Dorsolateral prefrontal cortex (tissue), 120 donors: ENCODE measurements at regions of chr2 and their contacts with region 1.

Region 1: DNA sequence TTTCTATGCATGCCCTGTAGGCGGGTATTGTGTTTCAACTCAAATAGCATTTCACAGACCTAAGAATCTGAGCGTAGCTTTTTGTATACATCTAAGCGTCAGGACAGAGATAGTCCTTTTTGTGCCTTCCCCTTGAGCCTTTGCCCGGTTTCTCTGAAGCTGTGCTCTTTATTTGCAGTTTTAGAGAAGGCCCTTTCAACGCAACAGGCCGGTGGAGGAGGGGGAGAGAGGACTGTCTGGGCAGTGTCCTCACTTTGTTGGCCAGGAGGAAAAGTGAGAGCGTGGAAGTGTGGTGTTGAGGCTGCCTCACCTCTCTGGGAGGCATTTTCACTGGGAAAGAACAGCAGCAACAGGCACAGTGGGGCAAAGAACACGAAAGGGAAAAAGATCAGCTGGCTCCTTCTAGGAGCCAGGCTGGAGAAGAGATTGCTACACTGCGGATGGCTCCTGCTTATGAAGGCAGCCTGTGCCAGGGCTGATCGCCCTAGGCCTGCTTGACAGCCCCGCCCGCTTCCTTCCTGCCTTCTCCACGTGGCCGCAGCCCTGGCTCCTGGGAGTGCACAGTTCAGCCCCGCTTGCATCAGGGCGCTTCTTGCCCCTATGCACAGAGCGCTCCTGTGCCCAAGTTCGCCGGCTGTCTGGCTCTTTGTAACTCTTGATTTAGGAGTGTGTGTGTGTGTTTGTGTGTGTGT is 195.6 kb upstream of the POU3F3 start:
- DNase-seq: peak in 8 of 10 donors; percentile 23 to 56 (median 50)
- H3K4me3 ChIP-seq: peak overlapping the region in 34 of 59 donors; percentile 13 to 73 (median 61)
- H3K27ac ChIP-seq: peak overlapping the region in 35 of 59 donors; percentile 0 to 80 (median 53)
- H3K27me3 ChIP-seq: peaks cover 0 to 11% (median 0%) of the 10 kb centered on the region in 45 donors
- CTCF ChIP-seq: no peak

Region 2: DNA sequence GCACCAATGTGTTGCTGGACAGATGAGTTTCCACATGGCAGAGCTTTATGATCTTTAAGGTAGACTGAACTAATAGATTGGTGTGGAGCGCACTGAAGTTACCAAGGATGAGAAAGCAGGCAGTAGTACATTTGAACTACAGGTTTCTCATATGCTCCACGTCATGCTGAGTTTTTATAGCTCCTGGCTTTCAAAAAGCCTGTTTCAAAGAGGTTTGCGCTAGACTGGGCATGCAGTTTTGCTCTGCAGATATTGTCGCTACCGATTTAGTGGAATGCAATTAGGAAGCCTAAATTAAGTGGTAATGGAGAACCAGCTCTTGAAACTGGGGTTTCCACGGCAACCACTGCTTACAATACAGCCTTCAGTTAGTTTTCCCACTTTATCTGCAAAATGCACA is 44.2 kb after region 1 on chr2:
- intact Hi-C with region 1: loop called in 1 of 2 experiments (anchors 5 kb)
- DNase-seq: peak in 1 of 10 donors; percentile 12
- H3K4me3 ChIP-seq: peak overlapping the region in 54 of 59 donors; percentile 10 to 67 (median 46)
- H3K27ac ChIP-seq: peak overlapping the region in 44 of 59 donors; percentile 7 to 76 (median 60)
- H3K27me3 ChIP-seq: peaks cover 0 to 8% (median 0%) of the 10 kb centered on the region in 45 donors
- CTCF ChIP-seq: no peak

Region 3: GRCh38 chr2:104938231-104938941 is 280.1 kb after region 1 on chr2:
- intact Hi-C with region 1: loop called in 1 of 2 experiments (anchors 10 kb)
- DNase-seq: peak in 7 of 10 donors; percentile 40 to 84 (median 69)
- H3K4me3 ChIP-seq: no peak overlapping the region
- H3K27ac ChIP-seq: no peak overlapping the region
- H3K27me3 ChIP-seq: no peaks in the 10 kb centered on the region
- CTCF ChIP-seq: no peak

Region 4: DNA sequence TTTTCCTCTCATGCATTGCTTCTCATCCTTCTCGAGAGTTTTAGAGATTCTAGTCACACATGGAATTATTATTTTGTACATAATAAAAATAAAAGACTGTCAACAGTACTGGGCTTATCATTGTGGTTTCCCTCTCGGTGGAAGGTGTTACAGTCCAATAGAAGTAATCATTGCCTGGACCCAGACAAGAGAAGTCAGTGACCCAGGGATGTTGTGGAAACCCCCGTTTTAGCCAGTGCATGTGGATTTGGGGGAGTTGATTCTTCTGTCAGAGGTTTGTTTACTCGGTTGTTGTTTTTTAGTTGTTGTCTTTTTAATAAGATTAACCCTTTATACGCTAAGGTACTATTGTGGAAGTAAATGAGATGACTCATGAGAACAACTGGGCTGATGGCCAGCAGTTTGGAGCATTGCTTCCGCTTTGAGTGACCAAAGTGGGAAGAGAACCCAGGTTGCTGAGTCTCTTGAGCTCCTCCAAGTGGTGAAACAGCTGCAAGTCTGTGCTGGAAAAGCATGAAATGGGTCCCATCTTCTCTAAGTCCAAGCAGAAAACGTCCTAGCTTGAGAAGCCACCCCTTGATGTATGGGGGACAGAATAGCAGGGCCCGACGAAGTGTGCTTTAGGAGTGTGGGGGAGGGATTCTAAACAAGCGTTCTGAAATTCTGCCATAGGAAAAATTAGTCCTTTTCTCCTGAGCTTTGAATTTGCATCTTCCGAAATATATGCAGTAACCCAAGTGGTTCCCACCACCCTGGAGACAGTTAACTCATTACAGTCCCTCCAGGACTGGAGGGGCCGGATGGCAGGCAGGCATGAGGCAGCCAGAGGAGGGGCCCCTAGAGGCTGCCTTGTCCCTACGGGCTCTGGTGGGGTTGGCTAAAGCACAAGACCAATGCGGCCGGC is 521.4 kb after region 1 on chr2:
- intact Hi-C with region 1: no loop called
- DNase-seq: peak in 5 of 10 donors; percentile 44 to 71 (median 49)
- H3K4me3 ChIP-seq: no peak overlapping the region
- H3K27ac ChIP-seq: no peak overlapping the region
- H3K27me3 ChIP-seq: peaks cover 0 to 3% (median 0%) of the 10 kb centered on the region in 45 donors
- CTCF ChIP-seq: peak in 50 of 56 donors; percentile 15 to 64 (median 45)